Sciatic nerve (tissue), 2 donors: ENCODE measurements at regions of chr6 and their contacts with region 1.

Region 1: DNA sequence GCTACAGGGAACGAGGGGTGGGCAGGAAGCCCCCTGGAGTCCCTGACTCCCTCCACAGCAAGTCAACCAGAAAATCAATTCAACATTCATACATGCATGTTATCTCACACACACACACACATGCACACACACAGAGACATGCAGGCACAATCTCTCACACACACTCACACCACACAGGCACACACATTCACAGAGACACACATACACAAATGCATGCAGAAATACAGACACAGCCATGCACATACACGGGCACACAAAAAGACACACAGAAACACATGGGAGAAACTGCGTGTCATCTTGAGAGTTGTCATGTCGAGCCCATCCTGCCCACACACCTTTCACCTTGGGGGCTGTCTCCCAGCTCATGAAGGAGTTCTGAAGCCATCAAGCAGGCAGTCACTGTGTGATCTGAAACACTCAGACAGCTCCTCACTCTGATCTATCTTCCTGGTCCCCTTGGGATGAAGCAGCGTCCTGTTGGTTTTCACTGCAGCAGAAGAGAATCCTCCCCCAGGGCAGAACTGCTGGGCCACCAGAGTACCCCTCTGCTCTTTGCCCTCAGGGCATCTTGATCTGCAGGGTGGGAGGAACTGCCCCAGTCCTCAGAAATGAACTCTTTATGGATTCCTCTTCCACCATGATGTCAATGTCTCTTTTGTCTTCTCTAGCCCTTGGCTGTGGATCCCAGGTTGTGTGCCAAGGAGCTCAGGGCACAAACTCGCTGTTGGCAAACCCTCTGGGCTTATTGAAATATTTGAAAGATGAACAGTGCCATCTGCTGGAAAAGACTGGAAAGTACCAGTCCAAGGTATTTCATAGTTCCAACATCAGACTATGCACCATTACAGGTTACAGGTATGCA is 8.8 kb downstream of the RAET1L start:
- DNase-seq: no peak
- ATAC-seq: peak; percentile 74

Region 2: GRCh38 chr6:149934249-149935156 is 82.1 kb before region 1 on chr6:
- intact Hi-C with region 1: loop called (anchors 2 kb)
- DNase-seq: no peak
- ATAC-seq: peak; percentile 68